ENCODE measurements at regions of chr1 and their contacts with region 1.

Region 1: GRCh38 chr1:235866913-235867845 is 473 bp upstream of the LYST start:
- DNase-seq: peak; percentile 93 to 98
- H3K4me3 ChIP-seq: peak overlapping the region; percentile 65
- H3K4me3 Mint-ChIP-seq: peak overlapping the region; percentile 98
- H3K27ac Mint-ChIP-seq: peak overlapping the region; percentile 48
- H3K4me1 ChIP-seq: peaks cover 4% of the 10 kb centered on the region; the same call in 1 of the 2 replicates
- H3K4me1 Mint-ChIP-seq: peaks cover 6% of the 10 kb centered on the region
- H3K27me3 ChIP-seq: no peaks in the 10 kb centered on the region
- H3K27me3 Mint-ChIP-seq: peaks cover 2% of the 10 kb centered on the region
- CTCF ChIP-seq: no peak

Region 2: GRCh38 chr1:235688096-235688495 is 179.1 kb before region 1 on chr1:
- CTCF ChIA-PET with region 1: no interaction called
- POLR2A ChIA-PET with region 1: no interaction called
- intact Hi-C with region 1: no loop called
- DNase-seq: no peak
- H3K4me3 ChIP-seq: no peak overlapping the region
- H3K4me3 Mint-ChIP-seq: no peak overlapping the region
- H3K27ac Mint-ChIP-seq: no peak overlapping the region
- H3K4me1 ChIP-seq: no peaks in the 10 kb centered on the region
- H3K4me1 Mint-ChIP-seq: no peaks in the 10 kb centered on the region
- H3K27me3 ChIP-seq: no peaks in the 10 kb centered on the region
- H3K27me3 Mint-ChIP-seq: no peaks in the 10 kb centered on the region
- CTCF ChIP-seq: no peak

Region 3: DNA sequence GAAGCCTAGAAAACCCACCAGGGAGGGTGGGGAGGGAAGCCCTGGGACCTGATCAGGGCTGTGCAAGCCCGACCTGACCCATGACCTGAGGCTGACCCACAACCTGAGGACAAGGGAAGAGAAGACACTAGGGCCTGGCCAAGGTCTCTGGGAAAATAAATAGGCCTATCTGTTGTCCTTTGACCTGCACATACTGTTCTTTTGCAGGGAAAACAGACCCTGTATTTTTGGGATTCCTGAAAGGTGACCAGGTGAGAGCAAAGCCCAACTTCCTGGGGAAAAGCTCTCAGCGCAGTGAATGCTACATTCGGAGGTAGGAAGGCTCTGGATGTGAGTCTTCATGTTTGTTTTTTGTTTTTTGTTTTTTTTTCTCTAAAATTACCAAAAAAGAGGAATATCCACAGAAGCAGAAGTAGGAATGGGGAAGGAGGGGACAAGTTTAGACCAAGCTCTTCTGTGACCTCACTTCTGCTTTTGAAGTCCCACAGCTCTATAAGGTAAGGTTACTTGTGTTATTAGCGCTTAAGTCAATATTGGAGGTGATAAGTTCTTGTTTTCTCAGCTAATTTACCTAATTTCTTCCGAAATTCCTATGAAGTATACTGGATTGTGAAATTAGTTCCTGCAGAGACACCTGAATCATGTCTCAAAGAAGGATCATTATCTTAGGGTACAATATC is 25.7 kb after region 1 on chr1:
- CTCF ChIA-PET with region 1: interaction called, 4 read pairs
- POLR2A ChIA-PET with region 1: no interaction called
- intact Hi-C with region 1: loop called (anchors 1 kb)
- DNase-seq: peak; percentile 76 to 89
- H3K4me3 ChIP-seq: no peak overlapping the region
- H3K4me3 Mint-ChIP-seq: peak overlapping the region; percentile 65
- H3K27ac Mint-ChIP-seq: peak overlapping the region; percentile 59
- H3K4me1 ChIP-seq: peaks cover 35% of the 10 kb centered on the region
- H3K4me1 Mint-ChIP-seq: peaks cover 28% of the 10 kb centered on the region
- H3K27me3 ChIP-seq: no peaks in the 10 kb centered on the region
- H3K27me3 Mint-ChIP-seq: no peaks in the 10 kb centered on the region
- CTCF ChIP-seq: no peak

Region 4: GRCh38 chr1:235917267-235917811 is 50.2 kb after region 1 on chr1:
- CTCF ChIA-PET with region 1: no interaction called
- POLR2A ChIA-PET with region 1: no interaction called
- intact Hi-C with region 1: no loop called
- DNase-seq: no peak
- H3K4me3 ChIP-seq: no peak overlapping the region
- H3K4me3 Mint-ChIP-seq: no peak overlapping the region
- H3K27ac Mint-ChIP-seq: no peak overlapping the region
- H3K4me1 ChIP-seq: peaks cover 17% of the 10 kb centered on the region
- H3K4me1 Mint-ChIP-seq: peaks cover 7% of the 10 kb centered on the region
- H3K27me3 ChIP-seq: no peaks in the 10 kb centered on the region
- H3K27me3 Mint-ChIP-seq: no peaks in the 10 kb centered on the region
- CTCF ChIP-seq: no peak

Region 5: DNA sequence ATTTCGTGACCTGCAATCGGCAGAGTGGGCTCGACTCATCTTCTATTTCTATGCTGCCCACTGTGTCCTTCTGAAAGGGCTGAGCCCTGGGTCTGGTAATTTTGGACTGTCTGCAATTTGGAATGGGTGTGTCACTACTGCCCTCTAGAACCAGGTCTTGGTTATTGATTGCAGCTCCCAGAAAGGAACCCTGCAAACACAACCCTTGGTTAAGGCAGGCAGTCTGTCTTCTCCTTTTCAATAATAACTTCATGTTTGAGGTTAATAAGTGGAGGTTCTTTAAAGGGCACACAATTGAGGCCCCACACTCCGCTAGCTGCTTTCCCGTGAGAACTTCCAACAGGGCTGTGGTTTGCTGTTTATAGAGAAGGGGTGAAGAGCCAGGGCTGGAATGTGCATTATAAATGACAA is 79.4 kb after region 1 on chr1:
- CTCF ChIA-PET with region 1: interaction called, 5 read pairs
- POLR2A ChIA-PET with region 1: no interaction called
- intact Hi-C with region 1: loop called (anchors 1 kb)
- DNase-seq: peak in 1 of 2 experiments; percentile 29
- H3K4me3 ChIP-seq: no peak overlapping the region
- H3K4me3 Mint-ChIP-seq: no peak overlapping the region
- H3K27ac Mint-ChIP-seq: no peak overlapping the region
- H3K4me1 ChIP-seq: no peaks in the 10 kb centered on the region
- H3K4me1 Mint-ChIP-seq: peaks cover 7% of the 10 kb centered on the region
- H3K27me3 ChIP-seq: no peaks in the 10 kb centered on the region
- H3K27me3 Mint-ChIP-seq: no peaks in the 10 kb centered on the region
- CTCF ChIP-seq: peak in 1 of 2 experiments; percentile 28

Measured in Caco-2 (cell line).